ENCODE measurements at regions of chr5 and their contacts with region 1.

Region 1: GRCh38 chr5:140302786-140303639 is at the start of gene PFDN1:
- DNase-seq: peak; percentile 98
- H3K4me3 Mint-ChIP-seq: peak within 1 kb of the TSS; percentile 97
- H3K27ac Mint-ChIP-seq: peak within 1 kb of the TSS; percentile 95
- H3K4me1 Mint-ChIP-seq: peaks cover 15% of the 10 kb centered on the region
- H3K27me3 Mint-ChIP-seq: peaks cover 4% of the 10 kb centered on the region
- total RNA-seq, gene PFDN1: 51.5 and 57.9 TPM in 2 replicates

Region 2: DNA sequence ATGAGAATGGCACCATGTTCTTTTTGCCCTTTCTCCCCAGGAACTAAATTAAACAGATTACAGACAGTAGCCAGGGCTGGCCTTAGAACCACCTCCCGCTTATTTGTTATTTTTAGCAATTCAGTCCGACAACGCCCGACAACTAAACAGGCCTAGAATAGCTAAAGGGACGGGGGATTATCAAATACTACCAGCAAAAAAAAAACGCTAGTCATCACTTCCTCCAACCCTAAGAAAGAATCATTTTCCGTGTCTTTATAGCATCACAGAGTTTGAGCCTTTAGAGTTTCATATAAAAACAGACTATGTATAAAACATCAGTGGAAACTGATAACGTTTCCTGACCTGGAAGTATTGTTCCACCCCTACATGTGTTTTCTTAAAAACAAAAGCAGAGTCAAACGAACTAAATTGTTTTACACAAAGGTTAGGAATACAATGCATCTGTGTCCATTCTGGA is 35.4 kb before region 1 on chr5:
- intact Hi-C with region 1: loop called (anchors 5 kb)
- DNase-seq: no peak
- H3K4me3 Mint-ChIP-seq: peak overlapping the region; percentile 63
- H3K27ac Mint-ChIP-seq: peak overlapping the region; percentile 26
- H3K4me1 Mint-ChIP-seq: peaks cover 36% of the 10 kb centered on the region
- H3K27me3 Mint-ChIP-seq: no peaks in the 10 kb centered on the region

Region 3: DNA sequence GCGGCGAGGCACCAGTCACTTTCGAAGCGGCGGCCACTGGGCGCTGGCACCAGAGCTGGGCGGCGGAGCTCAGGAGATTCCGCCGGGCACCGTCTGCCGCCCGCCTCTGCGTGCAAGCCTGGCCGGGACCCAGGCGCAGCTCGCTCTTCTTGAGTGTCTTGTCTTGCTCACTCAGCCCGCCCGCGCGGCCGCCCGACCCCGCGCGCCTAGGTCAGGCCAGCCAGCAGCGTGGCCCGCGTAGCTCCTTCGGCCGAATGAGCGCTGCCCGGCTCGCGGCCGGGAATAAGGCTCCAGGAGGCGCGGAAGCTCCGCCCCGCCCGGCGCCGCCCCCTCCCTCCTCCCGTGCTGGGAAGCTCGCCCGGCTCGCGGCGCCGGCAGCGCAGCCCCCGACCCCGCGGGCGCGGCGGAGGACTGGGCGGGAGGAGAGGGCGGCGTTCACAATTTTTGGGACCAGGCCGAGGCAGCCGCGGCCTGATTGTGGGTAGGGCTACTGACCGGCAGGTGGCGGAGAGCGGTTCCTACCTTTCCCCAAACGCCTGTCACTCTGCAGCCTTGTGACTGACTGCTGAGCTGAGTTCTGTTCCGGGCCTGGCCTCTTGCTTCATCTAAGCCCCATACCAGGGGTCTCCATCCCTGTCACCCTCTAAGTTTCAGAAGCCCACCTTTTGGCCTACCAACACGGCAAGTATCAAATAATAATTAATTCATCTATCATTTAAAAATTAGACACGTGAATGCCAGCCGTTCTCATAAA is 43.5 kb after region 1 on chr5 and contains the start of gene HBEGF:
- intact Hi-C with region 1: loop called (anchors 1 kb)
- DNase-seq: peak; percentile 89
- H3K4me3 Mint-ChIP-seq: peak within 1 kb of the TSS; percentile 89
- H3K27ac Mint-ChIP-seq: peak within 1 kb of the TSS; percentile 78
- H3K4me1 Mint-ChIP-seq: peaks cover 61% of the 10 kb centered on the region
- H3K27me3 Mint-ChIP-seq: peaks cover 6% of the 10 kb centered on the region
- total RNA-seq, gene HBEGF: 21.9 and 22.5 TPM in 2 replicates